ENCODE measurements at regions of chr1 and their contacts with region 1.

Region 1: DNA sequence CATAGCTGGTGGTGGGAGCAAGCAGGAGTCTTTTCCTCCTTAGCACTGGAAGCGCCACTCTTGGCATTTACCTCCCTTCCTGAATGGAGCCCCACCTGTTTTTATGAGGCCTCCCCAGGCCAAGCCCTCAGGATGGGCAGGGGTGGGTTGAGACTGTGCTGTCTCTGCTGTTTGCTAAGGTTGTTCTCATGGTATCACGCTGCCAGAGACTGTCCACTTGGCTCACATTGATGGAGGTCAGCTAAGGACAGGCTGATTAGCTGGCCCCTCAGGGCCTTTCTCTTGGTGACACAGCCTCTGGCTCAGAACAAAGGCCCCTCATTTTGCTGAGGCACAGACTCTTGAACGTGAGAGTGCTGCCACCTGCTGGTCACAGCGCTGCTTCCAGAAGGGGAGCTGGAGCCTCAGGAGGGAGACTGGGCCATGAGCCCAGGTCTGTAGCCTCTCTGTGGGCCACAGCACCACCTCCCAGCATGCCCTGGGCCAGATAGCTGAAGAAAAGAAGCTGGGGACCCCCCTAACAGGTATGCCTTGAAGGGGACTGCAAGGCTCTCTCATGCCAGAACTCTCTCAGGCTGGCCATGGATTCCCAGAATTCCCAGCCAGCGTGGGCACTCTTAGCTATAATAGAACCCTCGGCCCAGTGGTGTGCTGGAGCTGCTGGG is 85.6 kb downstream of the CD58 start:
- DNase-seq: peak; percentile 82
- CTCF ChIP-seq: peak; percentile 98

Region 2: GRCh38 chr1:116133696-116134650 is 351.2 kb before region 1 on chr1:
- CTCF ChIA-PET with region 1: interaction called, 254 read pairs
- POLR2A ChIA-PET with region 1: no interaction called
- DNase-seq: no peak
- CTCF ChIP-seq: no peak

Region 3: DNA sequence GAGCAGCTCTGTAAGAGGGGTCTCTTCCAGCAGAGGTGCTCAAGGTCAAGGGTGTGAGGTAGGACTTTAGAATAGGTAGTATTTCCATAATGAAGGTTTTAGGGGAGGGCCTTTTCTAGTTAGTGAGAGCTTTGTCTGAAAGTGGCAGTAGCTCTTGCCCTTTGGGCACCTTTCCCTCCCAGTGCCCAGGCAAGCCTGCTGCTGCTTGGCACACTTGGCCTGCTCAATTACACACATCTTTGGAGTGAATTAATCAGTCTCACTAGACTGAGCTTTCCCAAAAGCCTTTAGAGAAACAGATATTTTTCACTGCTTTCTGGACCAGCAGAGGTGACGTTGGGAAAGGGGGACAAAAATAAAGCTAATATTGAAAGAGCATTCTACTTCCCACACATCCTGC is 326.0 kb before region 1 on chr1:
- CTCF ChIA-PET with region 1: interaction called, 156 read pairs
- POLR2A ChIA-PET with region 1: no interaction called
- DNase-seq: no peak
- CTCF ChIP-seq: no peak

Region 4: DNA sequence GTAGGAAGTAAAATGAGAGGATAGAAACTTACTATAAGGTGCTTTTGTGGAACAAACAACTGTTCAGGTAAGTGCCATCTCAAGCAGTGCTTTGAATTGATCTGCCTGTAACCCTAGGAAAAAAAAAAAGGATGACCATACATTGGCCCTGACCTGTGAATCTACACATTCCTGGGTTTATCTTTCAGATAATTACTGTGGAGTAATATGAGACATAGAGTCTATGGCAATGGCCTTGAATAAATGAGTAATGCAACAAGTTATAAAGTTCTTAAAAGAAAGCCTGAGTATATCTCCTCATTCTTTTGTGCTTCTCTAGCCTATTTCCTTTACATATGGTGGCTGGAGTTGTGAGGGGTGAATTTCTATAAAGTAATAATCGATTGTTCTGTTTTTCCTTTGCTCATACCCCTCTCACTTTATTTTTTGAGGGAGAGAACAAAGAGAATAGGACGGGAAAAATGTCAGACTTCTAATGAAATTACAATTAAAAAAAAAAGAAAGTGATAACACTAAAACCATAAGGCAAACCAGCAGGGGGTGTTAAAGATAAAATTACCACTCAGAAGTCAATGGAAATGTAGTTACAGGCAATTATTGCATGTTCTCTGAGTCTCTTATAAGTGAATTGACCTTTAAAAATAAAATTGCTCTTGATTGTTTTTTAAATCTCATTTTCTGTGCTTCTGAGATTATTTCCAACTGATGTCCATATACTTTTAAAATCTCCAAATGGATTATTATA is 124.6 kb before region 1 on chr1:
- CTCF ChIA-PET with region 1: interaction called, 79 read pairs
- POLR2A ChIA-PET with region 1: no interaction called
- DNase-seq: peak; percentile 32
- CTCF ChIP-seq: peak; percentile 12

Region 5: GRCh38 chr1:116418091-116418830 is 66.9 kb before region 1 on chr1:
- CTCF ChIA-PET with region 1: interaction called, 35 read pairs
- POLR2A ChIA-PET with region 1: no interaction called
- DNase-seq: peak; percentile 88
- CTCF ChIP-seq: no peak

Region 6: GRCh38 chr1:116457946-116458604 is 27.1 kb before region 1 on chr1:
- CTCF ChIA-PET with region 1: interaction called, 20 read pairs
- POLR2A ChIA-PET with region 1: no interaction called
- DNase-seq: no peak
- CTCF ChIP-seq: no peak

Region 7: GRCh38 chr1:116514708-116515525 is 29.7 kb after region 1 on chr1:
- CTCF ChIA-PET with region 1: interaction called, 12 read pairs
- POLR2A ChIA-PET with region 1: no interaction called
- DNase-seq: peak; percentile 63
- CTCF ChIP-seq: no peak

Measured in GM10248 (cell line).